ENCODE measurements at regions of chr17 and their contacts with region 1.

Region 1: DNA sequence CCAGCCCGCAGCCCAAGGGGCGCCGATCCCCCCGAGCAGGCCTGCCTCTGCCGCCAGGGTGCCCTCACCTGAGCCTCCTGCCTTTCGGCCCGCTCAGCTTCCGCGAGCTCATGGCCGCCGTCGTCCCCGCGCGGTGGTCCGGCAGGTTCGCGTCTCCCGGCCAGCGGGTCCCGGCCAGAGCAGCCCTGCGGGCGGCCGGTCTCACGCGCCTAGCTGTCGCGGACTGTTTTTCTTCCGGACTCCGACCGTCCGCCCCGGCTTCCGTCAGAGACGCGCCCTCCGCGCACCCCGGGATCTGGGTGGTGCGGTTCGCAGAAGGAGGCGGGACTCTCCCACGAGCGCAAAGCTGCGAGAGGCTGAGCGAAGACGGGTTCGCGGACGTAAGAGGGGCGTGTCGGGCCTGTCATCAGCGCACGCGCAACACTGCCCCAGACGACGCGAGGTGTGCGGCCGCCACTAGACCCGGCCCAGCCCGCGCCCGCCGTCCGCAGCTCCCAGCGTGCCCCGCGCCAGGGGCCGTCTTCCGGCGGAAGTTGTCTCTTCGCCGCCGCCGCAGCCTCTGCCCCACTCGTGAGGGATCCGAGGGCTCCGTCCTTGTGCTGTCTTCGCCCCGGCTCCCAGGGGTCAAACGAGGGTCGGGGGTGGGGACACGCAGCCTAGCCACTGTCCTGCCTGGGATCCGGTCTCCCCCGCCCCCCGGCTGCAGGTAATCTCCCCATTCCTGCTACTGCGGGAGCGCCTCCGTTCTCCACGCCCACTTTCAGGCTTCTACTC is at the start of gene INPP5K:
- DNase-seq: peak; percentile 98
- H3K4me3 Mint-ChIP-seq: peak within 1 kb of the TSS; percentile 90
- H3K27ac Mint-ChIP-seq: peak within 1 kb of the TSS; percentile 95
- H3K4me1 Mint-ChIP-seq: peaks cover 30% of the 10 kb centered on the region
- H3K27me3 Mint-ChIP-seq: no peaks in the 10 kb centered on the region
- total RNA-seq, gene INPP5K: 50.3 to 56.9 TPM

Region 2: GRCh38 chr17:1365445-1366039 is 151.0 kb before region 1 on chr17:
- CTCF ChIA-PET with region 1: interaction called, 23 read pairs
- POLR2A ChIA-PET with region 1: interaction called, 3 read pairs
- DNase-seq: peak; percentile 76
- H3K4me3 Mint-ChIP-seq: no peak overlapping the region
- H3K27ac Mint-ChIP-seq: peak overlapping the region; percentile 36
- H3K4me1 Mint-ChIP-seq: peaks cover 64% of the 10 kb centered on the region
- H3K27me3 Mint-ChIP-seq: no peaks in the 10 kb centered on the region

Region 3: DNA sequence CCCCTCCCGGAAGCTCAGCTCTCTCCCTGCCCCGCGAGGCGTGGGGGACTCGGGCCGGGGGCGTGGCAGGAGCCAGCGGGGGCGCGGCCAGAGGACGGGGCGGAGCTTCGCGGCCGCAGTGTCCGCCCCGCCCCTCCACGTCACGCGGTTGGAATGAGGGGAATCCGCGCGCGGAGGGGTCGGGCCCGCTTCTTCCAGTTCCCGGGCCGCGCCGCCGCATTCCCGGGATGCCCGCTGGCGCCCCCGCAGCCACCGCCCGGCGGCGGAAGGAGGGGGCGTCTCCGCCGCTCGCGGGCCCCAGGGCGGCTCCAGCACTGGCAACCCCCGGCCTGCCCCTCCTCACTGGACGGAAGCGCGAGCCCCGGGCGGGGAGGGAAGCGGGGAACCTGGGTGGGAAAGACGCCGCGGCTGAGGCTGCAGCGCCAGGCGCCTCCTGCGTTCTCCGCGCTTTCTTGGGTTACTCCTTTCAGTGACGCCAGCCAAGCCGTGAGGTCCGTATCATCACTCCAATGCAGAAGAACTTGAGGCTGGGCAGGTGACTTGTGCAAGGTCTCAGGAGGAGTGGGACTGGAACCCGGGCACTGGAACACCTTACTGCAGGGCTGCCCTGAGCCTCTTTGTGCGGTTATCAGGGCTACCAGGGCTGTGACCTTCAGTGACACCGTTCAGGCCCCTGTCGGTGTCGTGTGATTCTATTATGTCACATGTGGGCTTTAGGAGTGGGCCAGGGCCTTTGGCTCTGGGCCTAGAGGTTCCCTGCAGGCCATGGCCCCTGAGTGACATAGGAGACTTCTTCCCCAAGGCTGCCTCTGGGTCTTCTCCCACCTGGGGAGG is 28.3 kb before region 1 on chr17:
- CTCF ChIA-PET with region 1: interaction called, 13 read pairs
- POLR2A ChIA-PET with region 1: interaction called, 5 read pairs
- DNase-seq: peak; percentile 64
- H3K4me3 Mint-ChIP-seq: peak overlapping the region; percentile 76
- H3K27ac Mint-ChIP-seq: peak overlapping the region; percentile 79
- H3K4me1 Mint-ChIP-seq: peaks cover 44% of the 10 kb centered on the region
- H3K27me3 Mint-ChIP-seq: peaks cover 5% of the 10 kb centered on the region

Region 4: GRCh38 chr17:1498869-1499268 is 17.7 kb before region 1 on chr17:
- CTCF ChIA-PET with region 1: interaction called, 18 read pairs
- POLR2A ChIA-PET with region 1: interaction called, 5 read pairs
- DNase-seq: no peak
- H3K4me3 Mint-ChIP-seq: no peak overlapping the region
- H3K27ac Mint-ChIP-seq: no peak overlapping the region
- H3K4me1 Mint-ChIP-seq: peaks cover 2% of the 10 kb centered on the region
- H3K27me3 Mint-ChIP-seq: no peaks in the 10 kb centered on the region

Region 5: GRCh38 chr17:1505586-1505985 is 11.0 kb before region 1 on chr17:
- CTCF ChIA-PET with region 1: interaction called, 12 read pairs
- POLR2A ChIA-PET with region 1: interaction called, 5 read pairs
- DNase-seq: no peak
- H3K4me3 Mint-ChIP-seq: no peak overlapping the region
- H3K27ac Mint-ChIP-seq: no peak overlapping the region
- H3K4me1 Mint-ChIP-seq: peaks cover 16% of the 10 kb centered on the region
- H3K27me3 Mint-ChIP-seq: no peaks in the 10 kb centered on the region

Region 6: DNA sequence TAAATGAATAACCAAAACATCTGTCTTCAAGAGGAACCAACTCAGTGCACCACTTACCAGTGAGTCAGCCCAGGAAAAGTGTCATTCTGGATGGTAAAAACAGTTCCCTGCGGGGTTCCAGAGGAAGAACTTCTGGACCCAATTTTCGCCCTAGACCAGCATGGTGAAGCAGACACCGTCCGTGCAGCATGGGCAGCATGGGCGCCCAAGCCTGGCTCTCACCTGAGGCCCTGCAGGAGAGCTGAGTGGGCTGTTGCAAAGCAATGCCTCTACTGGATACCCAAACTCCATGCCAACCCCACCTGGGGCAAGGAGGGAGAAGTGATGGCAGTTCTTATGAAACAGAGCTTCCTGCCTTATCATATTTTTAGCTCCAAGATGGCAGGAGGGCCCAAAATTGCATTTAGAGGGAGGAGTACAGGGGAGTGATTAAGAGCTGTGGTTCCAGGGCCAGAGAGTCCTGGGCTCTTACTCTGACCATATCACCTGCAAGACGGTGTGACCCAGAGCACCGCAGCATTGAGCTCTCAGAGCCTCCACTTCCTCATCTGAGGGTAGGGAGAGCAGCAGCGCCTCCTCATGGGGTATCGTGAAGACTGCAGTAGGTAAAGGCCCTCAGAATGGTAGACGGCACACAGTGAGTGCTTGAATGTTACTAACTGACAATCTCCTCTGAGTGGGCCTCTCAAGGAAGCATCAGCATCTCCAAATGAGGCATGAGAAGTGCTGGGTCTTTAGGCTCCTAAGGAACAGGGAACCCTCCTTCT is 16.4 kb after region 1 on chr17:
- CTCF ChIA-PET with region 1: interaction called, 12 read pairs
- POLR2A ChIA-PET with region 1: no interaction called
- DNase-seq: peak; percentile 51
- H3K4me3 Mint-ChIP-seq: no peak overlapping the region
- H3K27ac Mint-ChIP-seq: no peak overlapping the region
- H3K4me1 Mint-ChIP-seq: no peaks in the 10 kb centered on the region
- H3K27me3 Mint-ChIP-seq: no peaks in the 10 kb centered on the region

Region 7: DNA sequence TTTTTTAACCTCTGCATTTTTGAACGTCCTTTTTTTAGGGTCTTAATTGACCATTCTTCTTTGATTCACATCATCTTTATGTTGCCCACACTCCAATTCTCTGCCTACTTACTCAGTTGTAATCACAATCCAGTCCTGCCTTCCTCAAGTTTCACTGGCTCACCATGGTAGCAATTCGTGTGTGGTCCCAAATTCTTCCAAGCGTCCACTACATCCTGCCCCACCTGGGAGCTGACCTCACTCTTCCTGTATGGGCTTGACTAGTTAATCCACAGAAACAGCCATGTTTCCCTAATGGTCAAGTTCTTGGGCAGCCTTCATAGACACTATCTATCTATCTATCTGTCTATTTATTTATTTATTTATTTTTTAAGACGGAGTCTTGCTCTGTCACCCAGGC is 186.5 kb after region 1 on chr17:
- CTCF ChIA-PET with region 1: no interaction called
- POLR2A ChIA-PET with region 1: no interaction called
- DNase-seq: no peak
- H3K4me3 Mint-ChIP-seq: no peak overlapping the region
- H3K27ac Mint-ChIP-seq: no peak overlapping the region
- H3K4me1 Mint-ChIP-seq: peaks cover 4% of the 10 kb centered on the region
- H3K27me3 Mint-ChIP-seq: peaks cover 26% of the 10 kb centered on the region

Measured in activated CD4-positive, alpha-beta T cell treated with anti-CD3 and anti-CD28 coated beads, Interleukin-2, amount 10 ng/mL, durations not matched to agents 7 days and 5 days (primary cell).